Posterior vena cava (tissue), 2 donors: ENCODE measurements at regions of chr22 and their contacts with region 1.

Region 1: DNA sequence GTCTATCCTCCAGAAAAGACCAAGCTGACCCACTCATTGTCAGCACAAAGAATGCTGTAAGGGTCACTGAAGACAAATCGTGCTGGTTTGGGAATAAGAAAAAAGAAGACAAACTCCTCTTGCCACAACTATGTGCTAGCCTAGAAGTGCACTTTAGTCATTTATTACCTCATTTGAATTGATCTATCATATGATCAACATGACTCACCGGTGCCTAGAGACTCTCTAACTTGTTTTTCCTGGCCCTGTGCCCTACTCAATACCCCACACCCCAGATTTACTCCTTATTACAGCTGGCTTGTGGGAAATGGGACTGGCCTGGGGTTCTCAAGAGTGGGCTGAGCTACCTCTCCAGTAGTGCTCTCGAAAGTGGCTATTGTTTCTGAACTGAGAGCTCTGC is 35.9 kb upstream of the HORMAD2 start:
- DNase-seq: no peak

Region 2: GRCh38 chr22:29570456-29570855 is 473.9 kb before region 1 on chr22:
- intact Hi-C with region 1: loop called in 1 of 2 experiments (anchors 5 kb)
- DNase-seq: no peak

Region 3: DNA sequence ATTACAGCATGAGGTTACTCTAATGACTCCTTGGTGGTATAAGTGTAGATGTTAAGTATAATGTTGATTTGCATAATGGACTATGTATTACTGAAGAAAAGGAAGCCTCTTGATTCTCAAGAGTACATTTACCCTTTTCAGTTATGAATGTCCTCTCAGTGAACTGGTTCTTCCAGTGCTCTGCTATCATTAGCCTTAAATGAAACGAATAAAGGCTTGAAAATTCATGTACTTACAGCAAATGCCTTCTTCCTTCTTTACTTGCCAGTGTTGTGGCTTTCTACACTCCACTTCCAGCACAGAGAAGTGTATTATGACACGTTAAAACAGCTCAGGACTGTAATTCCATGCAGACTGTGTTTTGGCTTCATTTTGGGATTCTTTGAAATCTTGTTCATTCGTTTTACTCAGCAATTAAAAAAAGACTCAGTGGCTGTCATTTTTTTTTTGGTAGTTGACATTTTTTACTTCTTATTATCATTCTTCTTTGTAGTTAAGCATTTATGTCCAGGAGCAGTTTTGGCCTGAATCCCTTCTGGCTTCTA is 64.5 kb before region 1 on chr22:
- intact Hi-C with region 1: loop called in 1 of 2 experiments (anchors 10 kb)
- DNase-seq: no peak